Activated naive CD4-positive, alpha-beta T cell treated with anti-CD3 and anti-CD28 coated beads for 36 hours (primary cell): ENCODE measurements at regions of chr9 and their contacts with region 1.

Region 1: GRCh38 chr9:5799314-5799713 is 33.6 kb downstream of the ERMP1 start:
- DNase-seq: peak; percentile 42
- H3K4me3 Mint-ChIP-seq: no peak overlapping the region
- H3K27ac Mint-ChIP-seq: no peak overlapping the region
- H3K4me1 Mint-ChIP-seq: peaks cover 26% of the 10 kb centered on the region
- H3K27me3 Mint-ChIP-seq: no peaks in the 10 kb centered on the region

Region 2: GRCh38 chr9:5879419-5880181 is 80.3 kb after region 1 on chr9:
- CTCF ChIA-PET with region 1: no interaction called
- intact Hi-C with region 1: no loop called
- DNase-seq: no peak
- H3K4me3 Mint-ChIP-seq: no peak overlapping the region
- H3K27ac Mint-ChIP-seq: no peak overlapping the region
- H3K4me1 Mint-ChIP-seq: peaks cover 3% of the 10 kb centered on the region
- H3K27me3 Mint-ChIP-seq: no peaks in the 10 kb centered on the region

Region 3: DNA sequence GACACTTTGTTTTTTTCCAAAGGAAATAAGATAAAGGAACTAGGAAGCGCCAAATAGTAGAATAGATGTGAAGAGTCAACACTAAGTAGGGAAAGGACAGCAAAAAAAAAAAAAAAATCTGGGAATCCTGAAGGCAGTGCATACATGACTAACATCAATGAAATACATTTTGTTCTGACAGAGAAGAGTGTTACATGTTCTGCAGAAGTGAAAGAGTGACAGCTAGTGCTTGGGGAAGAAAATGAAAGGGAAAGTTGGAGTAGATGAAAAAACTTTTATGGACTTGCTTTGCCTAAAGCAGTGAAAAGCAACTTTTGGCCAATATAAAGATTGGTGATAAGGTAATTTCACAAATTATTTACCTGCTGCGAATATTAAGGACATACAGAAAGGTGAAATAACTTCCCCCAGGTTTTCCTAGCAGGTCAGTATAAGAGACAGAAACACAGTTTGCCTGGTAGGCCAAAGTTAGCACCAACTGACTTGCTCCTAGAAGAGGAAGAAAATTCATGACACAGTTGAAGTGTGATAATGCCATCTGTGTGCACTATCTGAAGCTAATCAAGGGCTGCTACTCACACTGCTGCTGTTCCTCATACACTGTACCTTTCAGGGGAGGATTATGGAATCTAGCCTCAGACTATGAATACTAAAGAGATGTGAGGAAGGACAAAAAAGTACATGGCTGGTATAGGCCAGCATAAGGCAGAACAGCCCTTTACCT is 177.5 kb after region 1 on chr9:
- CTCF ChIA-PET with region 1: no interaction called
- intact Hi-C with region 1: loop called (anchors 5 kb)
- DNase-seq: no peak
- H3K4me3 Mint-ChIP-seq: no peak overlapping the region
- H3K27ac Mint-ChIP-seq: peak overlapping the region; percentile 19
- H3K4me1 Mint-ChIP-seq: peaks cover 27% of the 10 kb centered on the region
- H3K27me3 Mint-ChIP-seq: no peaks in the 10 kb centered on the region

Region 4: GRCh38 chr9:6008169-6008979 is 209.1 kb after region 1 on chr9:
- CTCF ChIA-PET with region 1: no interaction called
- intact Hi-C with region 1: loop called (anchors 1 kb)
- DNase-seq: peak; percentile 98
- H3K4me3 Mint-ChIP-seq: peak overlapping the region; percentile 76
- H3K27ac Mint-ChIP-seq: peak overlapping the region; percentile 82
- H3K4me1 Mint-ChIP-seq: peaks cover 61% of the 10 kb centered on the region
- H3K27me3 Mint-ChIP-seq: no peaks in the 10 kb centered on the region

Region 5: DNA sequence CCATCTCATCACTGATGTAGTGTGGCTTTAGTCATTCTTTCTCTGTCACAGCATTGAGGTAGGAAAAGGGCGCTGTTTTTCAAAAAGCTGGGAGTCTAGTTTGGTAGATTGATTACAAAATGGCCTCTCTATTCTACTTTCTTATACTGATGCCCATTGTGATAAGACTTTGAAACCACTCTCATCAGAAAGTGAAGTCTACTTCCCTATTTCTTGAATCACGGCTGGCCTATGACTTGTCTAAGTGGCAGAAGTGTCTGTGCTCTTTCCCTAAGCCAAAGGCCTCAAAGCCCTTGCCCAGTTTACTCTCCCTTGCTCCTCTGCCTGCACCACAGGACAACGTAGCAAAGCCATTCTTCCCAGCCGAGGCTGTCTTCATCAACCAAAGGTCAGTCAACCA is 333.3 kb after region 1 on chr9:
- CTCF ChIA-PET with region 1: no interaction called
- intact Hi-C with region 1: no loop called
- DNase-seq: no peak
- H3K4me3 Mint-ChIP-seq: no peak overlapping the region
- H3K27ac Mint-ChIP-seq: no peak overlapping the region
- H3K4me1 Mint-ChIP-seq: no peaks in the 10 kb centered on the region
- H3K27me3 Mint-ChIP-seq: peaks cover 2% of the 10 kb centered on the region

Region 6: GRCh38 chr9:6305954-6306563 is 506.7 kb after region 1 on chr9:
- CTCF ChIA-PET with region 1: no interaction called
- intact Hi-C with region 1: loop called (anchors 10 kb)
- DNase-seq: no peak
- H3K4me3 Mint-ChIP-seq: no peak overlapping the region
- H3K27ac Mint-ChIP-seq: no peak overlapping the region
- H3K4me1 Mint-ChIP-seq: no peaks in the 10 kb centered on the region
- H3K27me3 Mint-ChIP-seq: no peaks in the 10 kb centered on the region